Naive thymus-derived CD4-positive, alpha-beta T cell (primary cell): ENCODE measurements at regions of chr13 and their contacts with region 1.

Region 1: DNA sequence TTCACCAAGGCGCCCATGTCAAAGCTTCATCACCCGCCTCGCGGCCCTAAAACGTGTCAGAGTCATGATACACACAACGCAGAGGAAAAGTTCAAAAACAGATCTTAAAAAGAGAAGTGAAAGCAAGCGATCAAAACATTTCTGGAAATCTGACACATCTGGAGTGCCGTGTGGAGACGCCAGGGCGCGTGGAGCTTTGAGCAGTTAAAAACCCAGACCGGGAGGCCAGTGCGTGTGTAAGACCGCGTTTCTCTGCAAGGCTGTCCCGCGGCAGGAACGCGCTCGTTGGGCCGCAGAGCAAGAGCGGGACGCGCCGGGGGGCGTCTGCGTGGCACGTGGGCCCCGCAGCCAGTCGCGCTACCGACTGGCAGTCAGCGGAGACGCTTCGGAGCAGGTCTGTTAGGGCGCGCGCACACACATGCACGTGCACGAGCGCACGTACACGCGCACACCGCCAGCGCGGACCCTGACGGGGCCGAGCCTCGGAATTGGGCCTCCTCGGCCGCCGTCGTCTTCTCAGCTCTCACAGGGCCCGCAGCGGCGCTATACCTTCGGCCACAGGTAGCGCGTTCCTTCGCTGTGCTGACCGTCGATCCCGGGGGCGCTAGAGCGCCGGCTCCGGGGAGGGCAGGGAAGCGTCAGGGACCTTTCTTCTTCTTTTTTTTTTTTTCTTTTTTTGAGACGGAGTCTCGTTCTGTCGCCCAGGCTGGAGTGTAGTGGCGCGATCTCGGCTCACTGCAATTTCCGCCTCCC is 35.8 kb downstream of the RNF6 start:
- DNase-seq: peak; percentile 86 to 93 (median 92)
- ATAC-seq: peak; percentile 96
- H3K4me3 ChIP-seq: peak overlapping the region; percentile 86
- H3K4me3 Mint-ChIP-seq: peak overlapping the region; percentile 87 to 99 (median 92)
- H3K27ac ChIP-seq: peak overlapping the region; percentile 80
- H3K27ac Mint-ChIP-seq: peak overlapping the region; percentile 92 to 99 (median 95)
- H3K4me1 ChIP-seq: peaks cover 10 to 13% of the 10 kb centered on the region in 2 donors
- H3K4me1 Mint-ChIP-seq: peaks cover 0 to 36% (median 27%) of the 10 kb centered on the region in 7 donors
- H3K27me3 ChIP-seq: no peaks in the 10 kb centered on the region
- H3K27me3 Mint-ChIP-seq: no peaks in the 10 kb centered on the region

Region 2: DNA sequence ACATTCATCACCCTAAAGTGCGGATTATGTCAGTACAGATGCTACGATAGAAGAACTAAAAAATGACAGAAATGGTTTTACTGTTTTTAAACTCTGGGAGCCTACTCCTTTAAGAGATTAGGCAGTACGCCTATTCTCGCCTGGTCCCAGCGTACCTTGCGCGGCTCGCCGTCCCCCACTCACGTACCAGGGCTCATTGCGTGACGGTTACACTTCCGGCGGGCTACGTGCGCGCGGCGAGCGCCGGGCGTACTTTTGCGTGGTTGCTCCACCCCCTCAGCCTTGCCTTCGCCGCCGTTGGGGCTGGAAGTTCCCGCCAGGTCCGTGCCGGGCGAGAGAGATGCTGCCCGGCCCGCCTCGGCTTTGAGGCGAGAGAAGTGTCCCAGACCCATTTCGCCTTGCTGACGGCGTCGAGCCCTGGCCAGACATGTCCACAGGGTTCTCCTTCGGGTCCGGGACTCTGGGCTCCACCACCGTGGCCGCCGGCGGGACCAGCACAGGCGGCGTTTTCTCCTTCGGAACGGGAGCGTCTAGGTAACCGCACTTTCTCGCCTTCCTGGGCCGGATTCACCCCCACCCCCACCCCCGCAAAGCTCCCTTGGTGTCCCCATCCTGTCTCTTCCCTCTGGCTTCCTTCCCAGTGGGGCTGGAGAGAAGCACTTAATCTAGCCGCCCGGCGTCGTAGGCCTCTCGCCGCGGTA is 884.8 kb before region 1 on chr13 and contains the start of gene NUP58:
- CTCF ChIA-PET with region 1: no interaction called
- POLR2A ChIA-PET with region 1: no interaction called
- intact Hi-C with region 1: loop called in 1 of 2 experiments (anchors 1 kb)
- DNase-seq: peak; percentile 83 to 94 (median 92)
- ATAC-seq: peak; percentile 99
- H3K4me3 ChIP-seq: peak within 1 kb of the TSS; percentile 64
- H3K4me3 Mint-ChIP-seq: peak within 1 kb of the TSS; percentile 86 to 95 (median 92)
- H3K27ac ChIP-seq: peak within 1 kb of the TSS; percentile 93
- H3K27ac Mint-ChIP-seq: peak within 1 kb of the TSS; percentile 87 to 97 (median 93)
- H3K4me1 ChIP-seq: peaks cover 13 to 22% of the 10 kb centered on the region in 2 donors
- H3K4me1 Mint-ChIP-seq: peaks cover 21 to 51% (median 47%) of the 10 kb centered on the region in 7 donors
- H3K27me3 ChIP-seq: peaks cover 0 to 5% of the 10 kb centered on the region in 2 donors
- H3K27me3 Mint-ChIP-seq: peaks cover 7 to 19% (median 10%) of the 10 kb centered on the region in 5 donors
- total RNA-seq, gene NUP58: 41.1 to 89.1 (median 57.0) TPM

Region 3: GRCh38 chr13:26168237-26168820 is 18.0 kb before region 1 on chr13:
- CTCF ChIA-PET with region 1: no interaction called
- POLR2A ChIA-PET with region 1: no interaction called
- intact Hi-C with region 1: no loop called
- DNase-seq: no peak
- ATAC-seq: no peak
- H3K4me3 ChIP-seq: no peak overlapping the region
- H3K4me3 Mint-ChIP-seq: no peak overlapping the region
- H3K27ac ChIP-seq: no peak overlapping the region
- H3K27ac Mint-ChIP-seq: no peak overlapping the region
- H3K4me1 ChIP-seq: no peaks in the 10 kb centered on the region
- H3K4me1 Mint-ChIP-seq: peaks cover 0 to 3% (median 0%) of the 10 kb centered on the region in 7 donors
- H3K27me3 ChIP-seq: no peaks in the 10 kb centered on the region
- H3K27me3 Mint-ChIP-seq: peaks cover 0 to 8% (median 0%) of the 10 kb centered on the region in 5 donors

Region 4: GRCh38 chr13:26221721-26222519 is 35.6 kb after region 1 on chr13 and contains the start of gene RNF6:
- CTCF ChIA-PET with region 1: interaction called, 15 read pairs
- POLR2A ChIA-PET with region 1: interaction called, 35 read pairs
- intact Hi-C with region 1: loop called (anchors 1 kb)
- DNase-seq: peak; percentile 83 to 92 (median 89)
- ATAC-seq: peak; percentile 95
- H3K4me3 ChIP-seq: peak within 1 kb of the TSS; percentile 96
- H3K4me3 Mint-ChIP-seq: peak within 1 kb of the TSS; percentile 95 to 100 (median 100)
- H3K27ac ChIP-seq: peak within 1 kb of the TSS; percentile 97
- H3K27ac Mint-ChIP-seq: peak within 1 kb of the TSS; percentile 93 to 100 (median 100)
- H3K4me1 ChIP-seq: peaks cover 16 to 17% of the 10 kb centered on the region in 2 donors
- H3K4me1 Mint-ChIP-seq: peaks cover 25 to 54% (median 49%) of the 10 kb centered on the region in 7 donors
- H3K27me3 ChIP-seq: no peaks in the 10 kb centered on the region
- H3K27me3 Mint-ChIP-seq: peaks cover 0 to 3% (median 0%) of the 10 kb centered on the region in 5 donors
- total RNA-seq, gene RNF6: 31.0 to 45.6 (median 44.6) TPM

Region 5: GRCh38 chr13:26482451-26483197 is 296.3 kb after region 1 on chr13:
- CTCF ChIA-PET with region 1: interaction called, 9 read pairs
- POLR2A ChIA-PET with region 1: no interaction called
- intact Hi-C with region 1: loop called (anchors 1 kb)
- DNase-seq: peak; percentile 27 to 82 (median 69)
- ATAC-seq: peak; percentile 92
- H3K4me3 ChIP-seq: peak overlapping the region; percentile 31
- H3K4me3 Mint-ChIP-seq: peak overlapping the region in 7 of 10 donors; percentile 46 to 60 (median 56)
- H3K27ac ChIP-seq: no peak overlapping the region
- H3K27ac Mint-ChIP-seq: peak overlapping the region; percentile 56 to 90 (median 83)
- H3K4me1 ChIP-seq: peaks cover 15 to 22% of the 10 kb centered on the region in 2 donors
- H3K4me1 Mint-ChIP-seq: peaks cover 4 to 27% (median 20%) of the 10 kb centered on the region in 7 donors
- H3K27me3 ChIP-seq: no peaks in the 10 kb centered on the region
- H3K27me3 Mint-ChIP-seq: no peaks in the 10 kb centered on the region

Region 6: DNA sequence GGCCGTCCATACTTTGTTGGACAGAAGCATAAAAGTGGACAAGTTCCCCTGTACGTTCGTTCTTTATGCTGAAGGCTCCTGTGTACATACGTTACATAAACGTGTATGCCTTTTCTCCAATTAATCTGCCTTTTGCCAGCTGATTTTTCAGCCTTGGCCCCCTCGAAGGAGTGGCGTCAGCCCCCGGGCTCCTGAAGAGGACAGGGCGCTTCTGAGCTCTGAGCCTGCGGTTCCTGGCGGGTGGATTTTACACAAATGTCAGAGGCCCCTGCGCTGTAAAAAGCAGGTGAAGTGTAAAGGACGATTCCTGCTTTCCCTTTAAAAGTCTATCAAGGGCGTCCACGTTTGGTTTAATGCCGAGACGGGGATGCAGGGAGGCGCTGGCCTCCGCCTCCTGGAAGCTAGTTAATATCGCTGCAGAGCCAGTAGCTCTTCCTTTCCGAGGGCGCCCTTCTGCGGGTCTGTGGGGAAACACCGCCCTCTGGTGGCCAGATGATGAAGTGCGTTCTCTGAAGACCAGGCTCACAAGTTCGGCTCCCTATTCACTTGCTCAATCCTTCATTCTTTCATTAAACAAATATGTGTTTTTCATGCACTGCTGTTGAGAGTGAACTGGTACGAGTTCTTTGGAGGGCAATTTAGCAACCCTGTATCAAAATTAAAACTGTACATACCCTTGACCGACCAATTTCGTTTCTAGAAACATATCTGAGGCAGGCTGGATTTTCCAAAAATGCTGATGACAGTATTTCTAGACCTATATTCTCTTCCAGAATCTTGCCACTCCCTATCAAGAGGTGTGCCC is 512.3 kb after region 1 on chr13:
- CTCF ChIA-PET with region 1: interaction called, 57 read pairs
- POLR2A ChIA-PET with region 1: no interaction called
- intact Hi-C with region 1: loop called (anchors 1 kb)
- DNase-seq: peak; percentile 52 to 81 (median 79)
- ATAC-seq: peak; percentile 89
- H3K4me3 ChIP-seq: no peak overlapping the region
- H3K4me3 Mint-ChIP-seq: peak overlapping the region in 5 of 10 donors; percentile 28 to 45 (median 39)
- H3K27ac ChIP-seq: no peak overlapping the region
- H3K27ac Mint-ChIP-seq: no peak overlapping the region
- H3K4me1 ChIP-seq: no peaks in the 10 kb centered on the region
- H3K4me1 Mint-ChIP-seq: peaks cover 0 to 10% (median 5%) of the 10 kb centered on the region in 7 donors
- H3K27me3 ChIP-seq: no peaks in the 10 kb centered on the region
- H3K27me3 Mint-ChIP-seq: peaks cover 0 to 23% (median 3%) of the 10 kb centered on the region in 5 donors

Region 7: GRCh38 chr13:27171827-27172494 is 985.7 kb after region 1 on chr13:
- CTCF ChIA-PET with region 1: no interaction called
- POLR2A ChIA-PET with region 1: no interaction called
- intact Hi-C with region 1: loop called in 1 of 2 experiments (anchors 5 kb)
- DNase-seq: peak; percentile 82 to 91 (median 88)
- ATAC-seq: peak; percentile 94
- H3K4me3 ChIP-seq: peak overlapping the region; percentile 58
- H3K4me3 Mint-ChIP-seq: peak overlapping the region; percentile 78 to 96 (median 88)
- H3K27ac ChIP-seq: peak overlapping the region; percentile 85
- H3K27ac Mint-ChIP-seq: peak overlapping the region; percentile 76 to 95 (median 88)
- H3K4me1 ChIP-seq: peaks cover 24 to 34% of the 10 kb centered on the region in 2 donors
- H3K4me1 Mint-ChIP-seq: peaks cover 23 to 49% (median 44%) of the 10 kb centered on the region in 7 donors
- H3K27me3 ChIP-seq: no peaks in the 10 kb centered on the region
- H3K27me3 Mint-ChIP-seq: no peaks in the 10 kb centered on the region

Region 8: DNA sequence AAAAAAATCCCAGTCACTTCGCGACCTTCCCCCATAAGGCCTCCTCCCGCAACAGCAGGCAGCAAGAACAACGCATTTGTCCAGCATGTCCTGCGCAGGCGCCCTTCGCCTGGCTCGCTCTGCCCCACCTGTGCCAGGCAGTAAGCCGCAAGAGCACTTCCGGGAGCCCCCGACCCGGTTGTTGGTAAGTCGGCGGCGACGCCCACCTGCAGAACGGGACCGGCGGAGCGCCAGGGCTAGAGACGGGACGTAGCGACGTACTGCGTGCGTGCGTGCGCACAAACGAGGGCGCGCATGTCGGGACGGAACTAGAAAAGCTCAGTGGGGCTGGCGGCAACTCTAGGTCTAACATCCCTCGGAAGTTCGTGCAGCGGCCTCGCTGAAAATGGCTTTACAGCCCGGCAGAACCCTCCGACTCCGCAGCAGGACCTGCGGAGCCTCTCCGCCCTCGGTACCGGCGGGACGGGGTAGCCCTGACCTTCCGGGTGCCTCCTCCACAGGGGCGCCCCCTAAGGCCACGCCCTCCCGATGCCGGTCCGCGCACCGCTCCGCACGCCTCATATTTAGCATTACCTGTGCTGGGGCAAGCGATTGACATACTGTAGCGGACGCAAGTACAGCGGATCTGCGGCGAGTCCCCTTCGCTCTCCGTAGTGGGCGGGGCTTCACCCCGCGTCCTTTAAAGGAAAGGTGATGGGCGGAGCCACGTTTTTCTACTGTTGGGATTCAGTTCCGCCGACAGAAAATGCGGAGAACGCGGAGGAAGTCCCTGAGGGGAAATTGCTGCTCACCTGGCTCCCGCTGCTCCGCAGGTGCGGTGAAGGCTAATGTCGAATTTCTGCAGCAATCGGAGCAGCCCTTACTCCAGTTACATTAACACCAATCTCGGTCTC is 1263.9 kb after region 1 on chr13 and contains the start of gene MTIF3:
- CTCF ChIA-PET with region 1: no interaction called
- POLR2A ChIA-PET with region 1: interaction called, 4 read pairs
- intact Hi-C with region 1: loop called (anchors 1 kb)
- DNase-seq: peak; percentile 90 to 99 (median 98)
- ATAC-seq: peak; percentile 89
- H3K4me3 ChIP-seq: peak within 1 kb of the TSS; percentile 82
- H3K4me3 Mint-ChIP-seq: peak within 1 kb of the TSS; percentile 89 to 96 (median 94)
- H3K27ac ChIP-seq: peak within 1 kb of the TSS; percentile 96
- H3K27ac Mint-ChIP-seq: peak within 1 kb of the TSS; percentile 94 to 100 (median 98)
- H3K4me1 ChIP-seq: peaks cover 35 to 41% of the 10 kb centered on the region in 2 donors
- H3K4me1 Mint-ChIP-seq: peaks cover 45 to 75% (median 56%) of the 10 kb centered on the region in 7 donors
- H3K27me3 ChIP-seq: no peaks in the 10 kb centered on the region
- H3K27me3 Mint-ChIP-seq: no peaks in the 10 kb centered on the region
- total RNA-seq, gene MTIF3: 28.4 to 89.6 (median 51.3) TPM